ENCODE measurements at regions of chr2 and their contacts with region 1.

Region 1: GRCh38 chr2:157777427-157777826 is 98.7 kb downstream of the ACVR1 start:
- DNase-seq: peak; percentile 70
- H3K4me3 ChIP-seq: no peak overlapping the region
- H3K27ac ChIP-seq: no peak overlapping the region
- H3K4me1 ChIP-seq: peaks cover 27% of the 10 kb centered on the region
- H3K27me3 ChIP-seq: no peaks in the 10 kb centered on the region
- CTCF ChIP-seq: peak; percentile 75

Region 2: GRCh38 chr2:157302492-157303099 is 474.8 kb before region 1 on chr2:
- CTCF ChIA-PET with region 1: no interaction called
- POLR2A ChIA-PET with region 1: no interaction called
- intact Hi-C with region 1: loop called (anchors 10 kb)
- DNase-seq: peak; percentile 70
- H3K4me3 ChIP-seq: no peak overlapping the region
- H3K27ac ChIP-seq: no peak overlapping the region
- H3K4me1 ChIP-seq: no peaks in the 10 kb centered on the region
- H3K27me3 ChIP-seq: peaks cover 48% of the 10 kb centered on the region
- CTCF ChIP-seq: peak; percentile 81

Region 3: DNA sequence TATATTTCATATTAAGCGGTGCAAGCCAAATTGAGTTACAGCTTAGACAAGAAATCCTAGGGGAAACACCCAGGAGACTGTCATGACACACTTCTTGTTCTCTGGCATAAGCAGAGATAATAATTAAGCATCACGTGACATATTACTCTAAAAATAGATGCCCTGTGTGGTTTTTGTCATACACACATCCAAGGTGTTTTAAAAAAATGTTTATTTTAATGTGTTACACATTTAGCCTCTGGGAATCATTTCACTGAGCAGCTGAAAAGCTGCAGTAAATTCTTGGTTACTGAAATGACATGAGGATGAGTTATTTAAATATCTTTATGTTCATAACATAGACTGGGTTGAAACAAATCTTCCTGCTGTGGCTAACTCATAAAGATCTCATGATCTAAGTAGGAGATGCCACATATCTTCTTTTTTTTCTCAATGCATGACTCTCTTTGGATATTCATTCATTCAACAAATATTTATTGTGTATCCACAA is 413.8 kb before region 1 on chr2:
- CTCF ChIA-PET with region 1: no interaction called
- POLR2A ChIA-PET with region 1: no interaction called
- intact Hi-C with region 1: no loop called
- DNase-seq: no peak
- H3K4me3 ChIP-seq: no peak overlapping the region
- H3K27ac ChIP-seq: no peak overlapping the region
- H3K4me1 ChIP-seq: no peaks in the 10 kb centered on the region
- H3K27me3 ChIP-seq: no peaks in the 10 kb centered on the region
- CTCF ChIP-seq: no peak

Region 4: DNA sequence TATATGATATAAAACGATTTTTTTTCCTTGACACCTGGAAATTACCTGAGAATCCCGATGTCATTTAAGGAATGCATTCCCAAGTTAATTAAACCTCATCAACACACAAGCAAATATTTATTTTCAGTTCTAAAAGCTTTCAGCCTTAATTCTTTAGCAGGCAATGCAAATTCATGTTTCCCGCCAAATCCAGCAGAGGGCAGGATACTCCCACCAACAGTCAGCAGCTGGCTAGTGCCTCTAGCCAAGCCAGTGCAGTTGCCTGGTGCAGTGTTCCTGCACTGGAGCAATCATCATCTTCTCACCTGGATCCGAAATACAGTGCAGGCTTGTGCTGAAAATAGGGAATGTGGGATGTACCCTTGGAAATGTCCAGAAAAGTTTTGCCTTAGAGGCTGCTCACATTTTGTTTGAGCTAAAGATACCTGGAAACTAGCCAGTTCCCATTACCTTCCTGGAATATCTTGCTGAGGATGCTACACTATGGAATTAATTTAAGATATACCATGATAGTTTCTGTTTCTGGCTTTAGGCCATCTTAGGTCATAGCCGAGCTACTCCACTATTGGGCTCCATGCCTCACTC is 285.1 kb before region 1 on chr2:
- CTCF ChIA-PET with region 1: no interaction called
- POLR2A ChIA-PET with region 1: no interaction called
- intact Hi-C with region 1: loop called (anchors 5 kb)
- DNase-seq: peak; percentile 72
- H3K4me3 ChIP-seq: no peak overlapping the region
- H3K27ac ChIP-seq: no peak overlapping the region
- H3K4me1 ChIP-seq: no peaks in the 10 kb centered on the region
- H3K27me3 ChIP-seq: peaks cover 9% of the 10 kb centered on the region
- CTCF ChIP-seq: peak; percentile 82

Region 5: GRCh38 chr2:157876066-157876787 is 98.8 kb after region 1 on chr2 and contains the start of gene ACVR1:
- CTCF ChIA-PET with region 1: interaction called, 3 read pairs
- POLR2A ChIA-PET with region 1: no interaction called
- intact Hi-C with region 1: loop called (anchors 2 kb)
- DNase-seq: peak; percentile 97
- H3K4me3 ChIP-seq: peak within 1 kb of the TSS; percentile 85
- H3K27ac ChIP-seq: peak within 1 kb of the TSS; percentile 89
- H3K4me1 ChIP-seq: no peaks in the 10 kb centered on the region
- H3K27me3 ChIP-seq: no peaks in the 10 kb centered on the region
- CTCF ChIP-seq: no peak; the same call in 1 of the 2 replicates
- total RNA-seq, gene ACVR1: 17.1 and 18.3 TPM in 2 replicates

Measured in A673 (cell line).